Activated CD4-positive, alpha-beta T cell treated with anti-CD3 and anti-CD28 coated beads, Interleukin-2, amount 10 ng/mL, durations not matched to agents 7 days and 5 days (primary cell): ENCODE measurements at regions of chr22 and their contacts with region 1.

Region 1: GRCh38 chr22:45324311-45324731 is 14.6 kb downstream of the FAM118A start:
- DNase-seq: no peak
- H3K4me3 Mint-ChIP-seq: peak overlapping the region; percentile 26
- H3K27ac Mint-ChIP-seq: peak overlapping the region; percentile 36
- H3K4me1 Mint-ChIP-seq: peaks cover 48% of the 10 kb centered on the region
- H3K27me3 Mint-ChIP-seq: no peaks in the 10 kb centered on the region

Region 2: GRCh38 chr22:45334528-45335419 is 10.5 kb after region 1 on chr22:
- CTCF ChIA-PET with region 1: interaction called, 10 read pairs
- POLR2A ChIA-PET with region 1: no interaction called
- DNase-seq: no peak
- H3K4me3 Mint-ChIP-seq: no peak overlapping the region
- H3K27ac Mint-ChIP-seq: no peak overlapping the region
- H3K4me1 Mint-ChIP-seq: peaks cover 30% of the 10 kb centered on the region
- H3K27me3 Mint-ChIP-seq: no peaks in the 10 kb centered on the region